ENCODE measurements at regions of chr10 and their contacts with region 1.

Region 1: DNA sequence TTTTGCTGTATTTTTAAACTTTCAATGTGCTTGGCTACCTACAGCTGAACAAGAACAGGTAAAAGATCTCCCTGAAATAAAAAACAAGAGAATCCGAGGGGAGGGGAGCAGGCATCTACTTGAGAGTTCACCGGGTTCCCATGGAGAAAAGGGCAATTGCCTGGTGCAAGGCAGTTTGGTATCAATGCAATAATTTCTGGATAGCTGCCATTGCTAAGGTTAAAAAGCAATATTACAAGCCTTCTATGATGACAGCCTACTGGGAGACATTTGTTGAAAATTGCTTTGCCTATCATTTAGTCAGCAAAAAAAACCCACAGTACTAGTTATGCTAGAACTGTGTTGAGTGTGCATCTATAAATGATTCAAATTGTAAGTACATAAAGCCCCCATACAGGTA is 82.1 kb downstream of the GFRA1 start:
- H3K4me3 ChIP-seq: no peak overlapping the region
- H3K27ac ChIP-seq: no peak overlapping the region
- H3K4me1 ChIP-seq: peaks cover 2% of the 10 kb centered on the region; the same call in 1 of the 2 replicates
- CTCF ChIP-seq: no peak

Region 2: GRCh38 chr10:115969591-115969990 is 221.3 kb before region 1 on chr10:
- CTCF ChIA-PET with region 1: no interaction called
- POLR2A ChIA-PET with region 1: no interaction called
- H3K4me3 ChIP-seq: no peak overlapping the region
- H3K27ac ChIP-seq: no peak overlapping the region
- H3K4me1 ChIP-seq: no peaks in the 10 kb centered on the region
- CTCF ChIP-seq: no peak

Region 3: DNA sequence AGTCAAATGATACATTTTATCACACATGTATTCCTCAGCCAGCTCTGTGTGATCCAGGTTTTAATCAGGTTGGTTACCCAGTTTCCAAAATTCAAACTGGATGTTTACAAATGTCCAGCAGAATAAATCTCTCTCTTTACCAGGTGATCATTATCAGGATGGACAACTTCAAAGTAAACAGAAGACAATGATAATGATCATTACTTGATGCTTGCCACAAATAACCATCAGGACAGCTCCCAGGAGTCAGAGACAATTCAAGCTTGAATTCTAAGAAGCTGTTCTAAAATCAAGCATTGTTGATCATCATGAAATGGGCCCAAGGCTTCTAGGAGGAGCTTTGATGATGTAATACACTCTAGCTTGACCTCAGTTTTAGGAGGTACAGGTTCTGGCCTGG is 29.5 kb after region 1 on chr10:
- CTCF ChIA-PET with region 1: interaction called, 6 read pairs
- POLR2A ChIA-PET with region 1: interaction called, 10 read pairs
- H3K4me3 ChIP-seq: no peak overlapping the region
- H3K27ac ChIP-seq: no peak overlapping the region
- H3K4me1 ChIP-seq: peaks cover 10% of the 10 kb centered on the region
- CTCF ChIP-seq: no peak

Measured in HEK293 (cell line).